Mammary epithelial cell (primary cell): ENCODE measurements at regions of chr19 and their contacts with region 1.

Region 1: DNA sequence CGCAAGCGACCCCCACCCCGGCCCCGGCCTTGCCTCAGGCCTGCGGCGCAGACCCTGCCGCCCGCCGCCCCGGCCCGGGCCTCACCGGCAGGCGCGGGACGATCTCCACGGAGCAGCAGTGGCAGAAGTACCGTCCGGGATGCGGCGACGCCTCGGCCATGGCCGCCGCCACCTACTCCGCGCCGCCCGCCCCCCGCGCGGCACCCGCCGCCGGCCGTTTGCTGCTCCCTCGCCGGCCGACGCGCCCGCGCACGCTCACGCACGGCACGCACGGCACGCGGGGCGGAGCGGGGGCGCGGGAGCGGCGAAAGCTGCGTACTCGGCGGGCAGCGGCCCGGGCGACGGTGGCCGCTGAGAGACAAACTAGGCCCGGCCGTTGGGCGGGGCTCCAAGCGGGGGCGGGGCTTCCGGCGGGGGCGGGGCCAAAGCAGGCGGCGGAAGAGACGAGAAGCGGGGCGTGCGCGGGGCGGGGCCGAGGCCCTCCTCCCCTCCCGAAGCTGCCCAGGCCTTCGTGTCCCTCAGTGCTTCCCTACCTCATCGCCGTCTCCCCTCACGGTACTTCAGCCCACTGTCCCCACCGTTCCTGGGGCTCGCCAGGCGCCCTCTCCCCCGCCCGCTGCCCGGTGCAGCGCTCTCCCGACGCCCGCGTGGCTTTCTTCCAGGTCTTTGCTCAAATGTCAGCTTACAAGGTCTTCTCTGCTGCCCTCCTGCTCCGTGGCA is at the start of gene RNF126:
- DNase-seq: peak; percentile 87
- H3K4me3 ChIP-seq: peak within 1 kb of the TSS; percentile 63 to 90 (median 71)
- H3K27ac ChIP-seq: peak within 1 kb of the TSS; percentile 71
- H3K4me1 ChIP-seq: peaks cover 45% of the 10 kb centered on the region
- H3K27me3 ChIP-seq: no peaks in the 10 kb centered on the region
- CTCF ChIP-seq: no peak
- total RNA-seq, gene RNF126: 79.2 to 83.9 TPM

Region 2: GRCh38 chr19:548841-549830 is 114.0 kb before region 1 on chr19:
- CTCF ChIA-PET with region 1: no interaction called
- dilution Hi-C with region 1: no loop called
- in situ Hi-C with region 1: no loop called
- intact Hi-C with region 1: loop called (anchors 1 kb)
- DNase-seq: no peak
- H3K4me3 ChIP-seq: no peak overlapping the region
- H3K27ac ChIP-seq: no peak overlapping the region
- H3K4me1 ChIP-seq: peaks cover 3% of the 10 kb centered on the region
- H3K27me3 ChIP-seq: no peaks in the 10 kb centered on the region
- CTCF ChIP-seq: no peak

Region 3: GRCh38 chr19:633068-633785 is 29.9 kb before region 1 on chr19 and contains the start of gene POLRMT:
- CTCF ChIA-PET with region 1: no interaction called
- dilution Hi-C with region 1: no loop called
- in situ Hi-C with region 1: no loop called
- intact Hi-C with region 1: loop called (anchors 2 kb)
- DNase-seq: peak; percentile 97
- H3K4me3 ChIP-seq: peak within 1 kb of the TSS; percentile 84 to 93 (median 84)
- H3K27ac ChIP-seq: peak within 1 kb of the TSS; percentile 51
- H3K4me1 ChIP-seq: peaks cover 14% of the 10 kb centered on the region
- H3K27me3 ChIP-seq: no peaks in the 10 kb centered on the region
- CTCF ChIP-seq: peak in 1 of 2 donors; percentile 17
- total RNA-seq, gene POLRMT: 23.5 to 50.9 TPM

Region 4: GRCh38 chr19:732148-733069 is 69.3 kb after region 1 on chr19:
- CTCF ChIA-PET with region 1: interaction called, 4 read pairs
- dilution Hi-C with region 1: no loop called
- in situ Hi-C with region 1: loop called (anchors 5 kb)
- intact Hi-C with region 1: loop called (anchors 1 kb)
- DNase-seq: no peak
- H3K4me3 ChIP-seq: no peak overlapping the region
- H3K27ac ChIP-seq: no peak overlapping the region
- H3K4me1 ChIP-seq: no peaks in the 10 kb centered on the region
- H3K27me3 ChIP-seq: no peaks in the 10 kb centered on the region
- CTCF ChIP-seq: no peak

Region 5: DNA sequence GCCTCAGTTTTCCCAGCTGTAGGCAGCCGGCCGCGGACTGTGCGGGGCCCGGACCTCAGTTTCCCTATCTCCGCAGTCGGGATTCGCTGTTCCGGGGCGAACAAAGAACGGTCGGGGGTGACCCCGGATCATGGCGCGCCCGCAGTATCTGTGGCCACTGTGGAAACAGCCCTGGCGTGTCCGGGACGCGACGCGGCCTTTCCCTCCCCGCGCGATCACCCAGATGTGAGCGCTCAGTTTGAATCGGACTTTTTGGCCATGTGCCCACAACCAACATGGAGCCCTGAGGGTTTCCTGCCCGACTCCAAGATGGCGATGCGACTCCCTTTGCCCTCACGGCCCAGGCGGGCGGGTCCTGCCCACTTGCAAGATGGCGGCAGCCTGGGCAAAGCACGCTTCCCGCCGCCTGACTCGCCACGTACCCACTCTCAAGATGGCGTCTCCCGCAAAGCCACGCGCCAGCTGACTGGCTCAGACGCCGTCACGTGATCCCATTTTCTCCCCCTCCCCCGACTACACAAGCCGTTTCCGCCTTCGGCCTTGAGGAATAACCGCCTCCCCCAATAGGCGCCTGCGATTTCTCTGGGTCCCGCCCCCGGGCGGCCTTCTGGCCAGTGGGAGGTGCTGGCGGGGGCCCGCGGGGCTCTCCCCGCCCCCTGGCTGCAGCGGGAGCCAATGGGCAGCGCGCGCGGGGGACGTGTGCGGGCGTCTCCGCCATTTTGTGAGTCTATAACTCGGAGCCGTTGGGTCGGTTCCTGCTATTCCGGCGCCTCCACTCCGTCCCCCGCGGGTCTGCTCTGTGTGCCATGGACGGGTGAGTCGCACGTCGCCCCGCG is 133.8 kb after region 1 on chr19 and contains the start of gene PTBP1:
- CTCF ChIA-PET with region 1: no interaction called
- dilution Hi-C with region 1: no loop called
- in situ Hi-C with region 1: no loop called
- intact Hi-C with region 1: loop called (anchors 1 kb)
- DNase-seq: peak; percentile 100
- H3K4me3 ChIP-seq: peak within 1 kb of the TSS; percentile 82 to 97 (median 92)
- H3K27ac ChIP-seq: peak within 1 kb of the TSS; percentile 68
- H3K4me1 ChIP-seq: peaks cover 26% of the 10 kb centered on the region
- H3K27me3 ChIP-seq: no peaks in the 10 kb centered on the region
- CTCF ChIP-seq: no peak
- total RNA-seq, gene PTBP1: 88.9 to 383 TPM